SK-N-SH (cell line): ENCODE measurements at regions of chr2 and their contacts with region 1.

Region 1: DNA sequence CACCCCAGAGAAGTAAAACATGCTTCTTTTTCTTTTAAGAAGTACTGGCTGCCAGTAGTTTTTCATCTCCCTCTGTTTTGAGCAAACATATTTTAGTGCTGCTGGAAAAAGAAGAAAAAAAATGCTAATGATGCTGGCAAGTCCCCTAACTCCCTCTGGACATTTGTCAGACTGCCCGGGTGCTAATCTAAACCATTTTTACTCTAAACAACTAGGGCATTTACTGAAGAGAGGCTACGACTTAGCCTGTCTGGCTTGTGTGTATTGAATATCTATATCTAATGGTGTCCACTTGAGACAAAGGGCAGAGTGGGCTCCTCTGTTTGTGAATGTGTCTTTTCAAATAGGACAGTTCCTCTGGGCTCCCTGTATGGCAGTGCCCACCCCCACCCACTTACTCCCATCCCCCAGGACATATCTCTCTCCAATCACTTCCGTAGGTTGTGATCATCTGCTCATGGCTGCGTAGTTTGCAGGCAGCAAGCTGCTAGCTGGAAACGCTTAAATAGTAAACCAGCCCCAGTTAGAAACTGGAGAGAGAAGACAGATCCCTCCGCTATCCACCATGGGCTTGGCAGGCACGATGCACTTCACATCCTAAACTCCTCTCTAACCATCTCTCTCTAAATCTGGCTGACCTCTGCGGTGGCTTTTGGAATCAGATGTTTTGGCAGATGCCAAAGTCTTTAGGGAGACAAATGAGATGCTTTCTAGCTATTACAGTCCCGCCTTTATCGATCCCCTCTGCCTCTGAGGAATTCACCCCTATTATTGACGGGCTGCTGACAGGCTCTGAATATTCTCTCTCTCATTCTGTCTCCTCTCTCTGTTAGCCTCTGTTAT is 58.3 kb downstream of the DOCK10 start:
- DNase-seq: peak; percentile 57
- H3K4me3 ChIP-seq: peak overlapping the region; percentile 46 to 57
- H3K27ac ChIP-seq: peak overlapping the region; percentile 87 to 99
- H3K4me1 ChIP-seq: peaks cover 11 to 20% of the 10 kb centered on the region in 2 experiments; a peak in 3 of 4 replicates
- H3K27me3 ChIP-seq: no peaks in the 10 kb centered on the region
- CTCF ChIP-seq: no peak
- EP300 ChIP-seq: no peak; a peak in 1 of 4 replicates
- RAD21 ChIP-seq: no peak

Region 2: GRCh38 chr2:225002039-225002655 is 18.2 kb after region 1 on chr2:
- CTCF ChIA-PET with region 1: interaction called, 34 read pairs
- POLR2A ChIA-PET with region 1: interaction called, 3 read pairs
- DNase-seq: peak; percentile 42
- H3K4me3 ChIP-seq: peak overlapping the region in 1 of 2 experiments; percentile 6; a peak in 1 of 4 replicates
- H3K27ac ChIP-seq: no peak overlapping the region
- H3K4me1 ChIP-seq: peaks cover 0 to 4% of the 10 kb centered on the region in 2 experiments; a peak in 2 of 4 replicates
- H3K27me3 ChIP-seq: no peaks in the 10 kb centered on the region
- CTCF ChIP-seq: peak; percentile 86
- EP300 ChIP-seq: no peak
- RAD21 ChIP-seq: peak; percentile 95

Region 3: DNA sequence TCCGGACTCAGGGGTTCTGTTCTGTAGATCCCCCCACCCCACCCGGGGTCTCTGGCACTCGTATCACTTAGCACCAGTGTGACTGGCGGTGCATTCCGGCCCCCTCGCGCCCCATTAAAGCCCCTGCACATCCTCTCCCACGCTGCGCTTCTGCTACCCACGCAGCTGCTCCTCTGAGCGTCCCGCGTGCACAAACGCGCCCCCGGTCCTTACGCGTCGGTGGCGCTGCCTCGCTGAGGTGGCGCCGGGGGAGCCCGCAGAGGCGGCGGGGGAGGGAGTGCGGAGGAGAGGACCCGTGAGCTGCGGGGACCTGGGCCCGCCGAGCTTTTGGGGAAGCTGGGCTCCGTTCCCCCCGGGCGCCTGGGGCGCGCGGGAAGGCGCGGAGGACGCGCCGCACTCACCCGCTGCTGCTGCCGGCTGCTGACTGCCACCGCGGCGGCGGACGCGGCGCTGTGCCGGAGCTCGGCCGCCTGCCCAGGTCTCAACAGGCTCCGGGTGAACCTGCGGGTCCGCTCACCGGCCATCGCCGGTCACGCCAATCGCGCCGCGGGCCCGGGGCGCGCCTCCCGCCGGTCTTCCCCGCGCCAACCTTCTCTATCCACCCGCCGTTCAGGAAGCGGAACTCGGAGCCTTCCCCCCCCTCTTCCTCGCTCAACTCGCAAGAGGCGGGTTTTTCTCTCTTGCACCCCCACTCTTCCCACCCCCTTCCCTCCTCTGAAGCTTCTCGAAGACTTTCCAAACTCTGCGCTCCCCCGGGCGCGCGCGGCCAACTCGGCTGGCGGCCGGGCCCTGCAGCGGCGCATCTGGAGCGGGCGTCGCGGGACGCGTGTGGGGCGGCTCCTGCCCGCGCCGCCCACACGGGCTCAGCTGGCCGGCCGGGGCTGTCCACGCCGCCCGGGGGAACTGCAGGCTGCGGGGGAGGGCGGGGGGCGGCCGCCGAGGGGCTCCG is 58.2 kb after region 1 on chr2 and contains the start of gene DOCK10:
- CTCF ChIA-PET with region 1: no interaction called
- POLR2A ChIA-PET with region 1: no interaction called
- DNase-seq: peak; percentile 81
- H3K4me3 ChIP-seq: peak within 1 kb of the TSS; percentile 72 to 78
- H3K27ac ChIP-seq: peak within 1 kb of the TSS in 1 of 2 experiments; percentile 24; a peak in 1 of 4 replicates
- H3K4me1 ChIP-seq: no peaks in the 10 kb centered on the region; a peak in 1 of 4 replicates
- H3K27me3 ChIP-seq: no peaks in the 10 kb centered on the region
- CTCF ChIP-seq: peak; percentile 14
- EP300 ChIP-seq: 0 out of 4 replicates have a peak, but pooled peaks of 1 of the 2 experiments have one; percentile 14
- RAD21 ChIP-seq: no peak
- polyA plus RNA-seq, gene DOCK10: 20.6 and 24.1 TPM in 2 replicates